Mammary epithelial cell (primary cell): ENCODE measurements at regions of chr1 and their contacts with region 1.

Region 1: GRCh38 chr1:93447516-93448291 is at the start of gene FNBP1L:
- DNase-seq: peak; percentile 73
- H3K4me3 ChIP-seq: peak within 1 kb of the TSS; percentile 71 to 89 (median 75)
- H3K27ac ChIP-seq: peak within 1 kb of the TSS; percentile 51
- H3K4me1 ChIP-seq: peaks cover 11% of the 10 kb centered on the region
- H3K27me3 ChIP-seq: no peaks in the 10 kb centered on the region
- CTCF ChIP-seq: no peak
- total RNA-seq, gene FNBP1L: 22.1 to 39.2 TPM

Region 2: DNA sequence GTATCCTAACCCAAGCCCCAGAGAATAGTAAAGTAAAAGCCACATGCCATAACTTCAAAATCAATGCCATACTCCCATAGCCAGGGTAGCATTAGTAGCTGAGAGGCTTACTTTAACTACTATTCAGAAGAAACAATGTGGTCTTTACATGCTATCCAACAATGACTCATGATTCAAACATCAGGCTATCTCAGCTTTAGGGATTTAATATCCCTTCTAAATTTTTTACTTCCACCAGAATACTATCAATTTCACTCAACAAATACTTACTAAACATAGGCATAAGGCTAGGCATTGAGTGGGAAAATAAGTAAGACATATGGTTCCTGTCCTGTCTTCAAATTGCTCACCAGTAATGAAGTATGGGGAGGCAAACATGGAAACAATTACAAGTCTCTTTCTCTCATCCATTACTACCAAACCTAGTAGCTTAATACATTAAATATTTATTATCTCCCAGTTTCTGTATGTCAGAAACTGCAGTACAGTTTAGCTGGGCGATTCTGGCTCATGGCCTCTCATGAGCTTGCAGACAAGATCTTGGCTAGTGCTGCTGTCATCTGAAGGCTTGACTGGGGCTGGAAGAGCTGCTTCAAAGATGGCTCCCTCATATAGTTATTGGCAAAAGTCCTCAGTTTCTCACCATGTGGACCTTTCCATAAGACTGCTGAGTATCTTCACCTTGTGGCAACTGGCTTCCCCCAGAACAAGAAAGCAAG is 693.5 kb before region 1 on chr1:
- CTCF ChIA-PET with region 1: no interaction called
- dilution Hi-C with region 1: no loop called
- in situ Hi-C with region 1: no loop called
- intact Hi-C with region 1: no loop called
- DNase-seq: peak; percentile 35
- H3K4me3 ChIP-seq: no peak overlapping the region
- H3K27ac ChIP-seq: no peak overlapping the region
- H3K4me1 ChIP-seq: peaks cover 19% of the 10 kb centered on the region
- H3K27me3 ChIP-seq: no peaks in the 10 kb centered on the region
- CTCF ChIP-seq: no peak

Region 3: GRCh38 chr1:93207211-93207610 is 240.5 kb before region 1 on chr1:
- CTCF ChIA-PET with region 1: no interaction called
- dilution Hi-C with region 1: no loop called
- in situ Hi-C with region 1: no loop called
- intact Hi-C with region 1: no loop called
- DNase-seq: no peak
- H3K4me3 ChIP-seq: no peak overlapping the region
- H3K27ac ChIP-seq: no peak overlapping the region
- H3K4me1 ChIP-seq: no peaks in the 10 kb centered on the region
- H3K27me3 ChIP-seq: no peaks in the 10 kb centered on the region
- CTCF ChIP-seq: no peak

Region 4: DNA sequence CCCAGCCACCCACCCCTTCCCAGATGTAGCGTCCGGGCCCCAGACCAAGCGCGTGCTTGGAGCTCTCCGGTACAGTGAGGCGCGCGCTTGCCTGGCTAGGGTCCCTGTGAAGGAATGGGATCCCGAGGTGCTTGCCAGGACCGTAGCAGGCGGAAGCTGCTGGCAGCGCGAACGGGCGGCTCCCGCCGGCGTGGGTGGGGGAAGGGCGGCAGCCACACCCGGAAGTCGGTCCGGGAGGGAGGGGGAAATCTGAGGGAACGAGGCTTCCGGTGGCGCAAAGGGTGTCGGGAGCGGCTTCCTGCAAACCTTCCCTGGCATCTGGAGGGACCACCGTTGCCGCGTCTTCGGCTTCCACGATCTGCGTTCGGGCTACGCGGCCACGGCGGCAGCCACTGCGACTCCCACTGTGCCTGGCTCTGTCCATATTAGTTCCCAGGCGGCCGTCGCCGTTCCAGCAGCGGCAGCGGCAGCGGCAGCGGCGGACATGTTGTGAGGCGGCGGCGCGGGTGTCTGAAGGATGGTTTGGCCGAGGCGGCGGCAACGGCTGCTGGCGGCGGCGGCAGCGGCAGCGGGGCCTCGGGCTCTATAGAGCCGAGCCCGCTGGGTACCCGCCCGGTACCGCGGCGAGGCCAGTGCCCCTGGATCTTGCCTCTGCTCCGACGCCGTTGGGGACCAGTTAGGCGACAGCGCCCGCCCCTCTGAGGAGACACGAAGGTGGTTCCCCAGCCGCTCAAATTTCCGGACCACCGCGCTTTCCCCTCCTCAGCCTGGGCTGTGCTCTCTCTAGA is 101.9 kb before region 1 on chr1 and contains the start of gene DR1:
- CTCF ChIA-PET with region 1: no interaction called
- dilution Hi-C with region 1: no loop called
- in situ Hi-C with region 1: no loop called
- intact Hi-C with region 1: loop called (anchors 5 kb)
- DNase-seq: peak; percentile 92
- H3K4me3 ChIP-seq: peak within 1 kb of the TSS; percentile 87 to 97 (median 96)
- H3K27ac ChIP-seq: peak within 1 kb of the TSS; percentile 92
- H3K4me1 ChIP-seq: peaks cover 23% of the 10 kb centered on the region
- H3K27me3 ChIP-seq: no peaks in the 10 kb centered on the region
- CTCF ChIP-seq: no peak
- total RNA-seq, gene DR1: 35.8 to 79.2 TPM

Region 5: GRCh38 chr1:93552741-93553455 is 105.2 kb after region 1 on chr1:
- CTCF ChIA-PET with region 1: no interaction called
- dilution Hi-C with region 1: no loop called
- in situ Hi-C with region 1: no loop called
- intact Hi-C with region 1: loop called (anchors 2 kb)
- DNase-seq: peak; percentile 78
- H3K4me3 ChIP-seq: peak overlapping the region in 1 of 3 experiments; percentile 4
- H3K27ac ChIP-seq: peak overlapping the region; percentile 39
- H3K4me1 ChIP-seq: peaks cover 30% of the 10 kb centered on the region
- H3K27me3 ChIP-seq: no peaks in the 10 kb centered on the region
- CTCF ChIP-seq: no peak

Region 6: DNA sequence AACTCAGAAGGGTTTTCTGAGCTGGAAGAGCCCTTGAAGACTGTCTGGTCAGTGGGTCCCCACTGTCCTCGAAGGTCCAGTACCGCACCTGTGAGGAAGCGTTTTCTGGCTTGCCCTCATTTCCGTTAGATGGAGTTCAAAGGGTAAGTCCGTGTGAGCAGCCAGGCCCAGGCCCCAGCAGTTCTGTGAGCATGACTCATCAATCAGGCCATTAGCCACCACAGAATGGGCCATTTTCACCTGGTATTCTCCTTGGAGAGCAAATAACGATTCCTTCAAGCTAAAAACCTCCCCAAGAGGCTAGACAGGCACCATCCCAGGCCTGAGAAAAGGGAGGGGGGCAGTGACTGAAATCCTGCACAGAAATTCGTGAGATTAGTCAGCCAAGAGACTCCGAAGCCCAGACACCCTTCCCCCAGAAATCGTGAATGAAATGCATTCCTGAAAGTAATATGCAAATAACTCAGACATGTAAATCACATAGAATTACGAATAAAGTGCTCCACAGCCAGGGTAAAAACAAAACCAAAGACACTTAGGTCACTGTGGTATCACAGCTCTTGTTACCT is 168.0 kb after region 1 on chr1:
- CTCF ChIA-PET with region 1: no interaction called
- dilution Hi-C with region 1: no loop called
- in situ Hi-C with region 1: no loop called
- intact Hi-C with region 1: loop called (anchors 5 kb)
- DNase-seq: peak; percentile 60
- H3K4me3 ChIP-seq: no peak overlapping the region
- H3K27ac ChIP-seq: peak overlapping the region; percentile 73
- H3K4me1 ChIP-seq: peaks cover 86% of the 10 kb centered on the region
- H3K27me3 ChIP-seq: no peaks in the 10 kb centered on the region
- CTCF ChIP-seq: no peak

Region 7: GRCh38 chr1:94045465-94046056 is 597.9 kb after region 1 on chr1:
- CTCF ChIA-PET with region 1: no interaction called
- dilution Hi-C with region 1: no loop called
- in situ Hi-C with region 1: no loop called
- intact Hi-C with region 1: loop called (anchors 10 kb)
- DNase-seq: peak; percentile 91
- H3K4me3 ChIP-seq: no peak overlapping the region
- H3K27ac ChIP-seq: no peak overlapping the region
- H3K4me1 ChIP-seq: peaks cover 16% of the 10 kb centered on the region
- H3K27me3 ChIP-seq: no peaks in the 10 kb centered on the region
- CTCF ChIP-seq: peak; percentile 81